ENCODE measurements at regions of chr4 and their contacts with region 1.

Region 1: GRCh38 chr4:39977489-39978377 is at the start of gene PDS5A:
- DNase-seq: peak; percentile 86 to 95 (median 91)
- H3K4me3 ChIP-seq: peak within 1 kb of the TSS; percentile 22 to 66
- H3K4me3 Mint-ChIP-seq: peak within 1 kb of the TSS; percentile 87 to 92 (median 90)
- H3K27ac ChIP-seq: peak within 1 kb of the TSS; percentile 92
- H3K27ac Mint-ChIP-seq: peak within 1 kb of the TSS; percentile 95 to 97 (median 96)
- H3K4me1 ChIP-seq: peaks cover 39% of the 10 kb centered on the region
- H3K4me1 Mint-ChIP-seq: peaks cover 23 to 40% (median 31%) of the 10 kb centered on the region in 4 donors
- H3K27me3 ChIP-seq: no peaks in the 10 kb centered on the region
- H3K27me3 Mint-ChIP-seq: no peaks in the 10 kb centered on the region
- total RNA-seq, gene PDS5A: 96.9 to 97.6 TPM

Region 2: DNA sequence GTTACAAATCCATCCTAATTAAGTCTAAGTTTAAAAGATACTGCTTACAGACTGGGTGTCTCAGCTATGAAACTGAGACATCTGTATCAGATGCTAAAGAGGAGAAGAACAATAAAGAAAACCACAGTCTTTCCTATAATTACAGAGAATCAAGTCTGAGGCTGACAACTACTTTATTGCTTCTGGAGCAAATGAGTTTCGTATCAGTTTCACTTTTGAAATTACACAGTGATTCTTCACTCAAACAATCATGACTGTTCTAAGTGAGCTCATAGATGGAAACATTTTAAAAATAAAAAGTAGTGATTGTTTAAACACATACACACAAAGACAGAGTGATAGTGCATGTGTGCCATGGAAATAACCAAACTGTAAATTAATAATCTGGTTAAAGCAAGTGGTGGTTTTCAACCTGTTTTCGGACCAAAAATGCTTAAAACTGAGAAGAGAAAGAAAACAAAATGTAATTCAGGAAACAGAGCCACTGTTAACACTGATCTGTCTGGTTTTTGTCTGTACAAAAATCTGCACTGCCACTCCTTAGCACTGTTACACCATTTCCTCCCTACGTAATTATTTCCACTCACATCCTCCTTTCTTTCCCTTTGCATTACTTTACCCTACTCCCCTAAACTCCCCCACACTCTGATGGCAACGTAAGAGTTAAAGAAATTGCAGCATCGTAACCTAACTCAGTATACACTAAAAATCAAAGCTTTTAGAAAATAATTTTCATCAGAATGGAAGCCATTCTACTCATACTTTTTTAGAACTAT is 624.1 kb before region 1 on chr4:
- CTCF ChIA-PET with region 1: no interaction called
- POLR2A ChIA-PET with region 1: no interaction called
- intact Hi-C with region 1: loop called (anchors 10 kb)
- DNase-seq: peak; percentile 46 to 70 (median 63)
- H3K4me3 ChIP-seq: peak overlapping the region; percentile 3 to 61
- H3K4me3 Mint-ChIP-seq: peak overlapping the region; percentile 79 to 92 (median 84)
- H3K27ac ChIP-seq: peak overlapping the region; percentile 73
- H3K27ac Mint-ChIP-seq: peak overlapping the region; percentile 91 to 98 (median 94)
- H3K4me1 ChIP-seq: peaks cover 58% of the 10 kb centered on the region
- H3K4me1 Mint-ChIP-seq: peaks cover 39 to 77% (median 53%) of the 10 kb centered on the region in 4 donors
- H3K27me3 ChIP-seq: no peaks in the 10 kb centered on the region
- H3K27me3 Mint-ChIP-seq: no peaks in the 10 kb centered on the region

Region 3: DNA sequence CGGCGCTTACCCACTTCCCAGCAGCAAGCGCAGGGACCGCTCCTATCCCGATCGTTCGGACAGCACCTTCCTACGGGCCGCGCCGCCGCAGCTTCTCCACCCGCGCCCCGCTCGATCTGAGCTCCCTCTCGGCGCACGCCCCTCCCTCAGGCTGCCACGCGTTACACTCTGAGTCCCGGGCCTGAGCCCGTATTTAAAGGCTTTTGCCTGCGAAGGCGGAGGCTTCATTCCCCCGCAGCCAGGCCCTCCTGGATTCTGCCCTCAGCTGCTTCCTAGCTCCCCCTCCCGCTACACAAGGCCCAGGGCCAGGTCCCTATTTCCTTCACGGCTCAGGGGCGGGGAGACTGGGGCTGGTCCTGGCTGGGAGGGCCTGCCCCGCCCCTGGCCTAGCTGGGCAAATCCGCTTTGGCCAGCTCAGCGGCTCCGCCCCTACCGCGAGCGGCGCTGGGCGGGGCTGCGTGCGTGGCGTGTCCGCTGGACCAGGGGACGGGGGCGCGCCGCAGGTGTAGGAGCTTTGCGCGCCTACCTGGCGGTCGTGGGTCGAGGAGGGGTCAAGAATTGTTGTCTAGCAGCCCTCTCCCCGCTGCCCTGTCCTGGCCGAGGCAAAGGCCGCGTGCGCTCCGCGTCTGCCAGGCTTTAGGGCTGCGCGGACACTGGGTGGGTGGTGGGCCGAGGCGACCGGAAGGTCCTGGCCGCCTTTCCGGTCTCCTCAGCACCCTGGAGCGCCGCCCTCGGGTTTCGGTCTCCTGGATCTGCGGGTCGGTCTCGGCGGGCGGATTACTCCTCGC is 450.3 kb before region 1 on chr4 and contains the start of gene UGDH:
- CTCF ChIA-PET with region 1: no interaction called
- POLR2A ChIA-PET with region 1: interaction called, 3 read pairs
- intact Hi-C with region 1: loop called (anchors 1 kb)
- DNase-seq: peak; percentile 88 to 92 (median 90)
- H3K4me3 ChIP-seq: peak within 1 kb of the TSS; percentile 71 to 91
- H3K4me3 Mint-ChIP-seq: peak within 1 kb of the TSS; percentile 97 to 99 (median 98)
- H3K27ac ChIP-seq: peak within 1 kb of the TSS; percentile 69
- H3K27ac Mint-ChIP-seq: peak within 1 kb of the TSS; percentile 78 to 98 (median 96)
- H3K4me1 ChIP-seq: peaks cover 18% of the 10 kb centered on the region
- H3K4me1 Mint-ChIP-seq: peaks cover 10 to 25% (median 18%) of the 10 kb centered on the region in 4 donors
- H3K27me3 ChIP-seq: no peaks in the 10 kb centered on the region
- H3K27me3 Mint-ChIP-seq: no peaks in the 10 kb centered on the region
- total RNA-seq, gene UGDH: 21.6 to 26.5 TPM

Region 4: DNA sequence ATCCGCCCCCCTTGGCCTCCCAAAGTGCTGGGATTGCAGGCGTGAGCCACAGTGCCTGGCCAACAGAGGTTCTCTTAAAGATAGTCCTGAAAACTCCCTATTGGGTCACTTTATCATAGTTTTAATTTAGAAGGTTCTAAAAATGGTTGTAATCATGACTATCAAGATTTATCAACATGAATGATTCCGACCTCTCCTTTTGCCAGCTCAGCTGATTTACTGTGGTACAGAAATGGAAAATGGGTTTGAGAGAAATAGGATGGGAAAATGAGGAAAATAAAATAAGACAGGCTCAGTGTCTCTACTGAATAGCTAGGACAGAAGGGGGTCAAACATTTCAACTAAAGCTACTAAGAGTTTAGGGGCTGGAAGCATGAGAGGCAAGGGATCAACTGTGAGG is 422.3 kb before region 1 on chr4:
- CTCF ChIA-PET with region 1: no interaction called
- POLR2A ChIA-PET with region 1: no interaction called
- intact Hi-C with region 1: no loop called
- DNase-seq: no peak
- H3K4me3 ChIP-seq: no peak overlapping the region
- H3K4me3 Mint-ChIP-seq: no peak overlapping the region
- H3K27ac ChIP-seq: no peak overlapping the region
- H3K27ac Mint-ChIP-seq: no peak overlapping the region
- H3K4me1 ChIP-seq: no peaks in the 10 kb centered on the region
- H3K4me1 Mint-ChIP-seq: no peaks in the 10 kb centered on the region
- H3K27me3 ChIP-seq: no peaks in the 10 kb centered on the region
- H3K27me3 Mint-ChIP-seq: no peaks in the 10 kb centered on the region

Region 5: DNA sequence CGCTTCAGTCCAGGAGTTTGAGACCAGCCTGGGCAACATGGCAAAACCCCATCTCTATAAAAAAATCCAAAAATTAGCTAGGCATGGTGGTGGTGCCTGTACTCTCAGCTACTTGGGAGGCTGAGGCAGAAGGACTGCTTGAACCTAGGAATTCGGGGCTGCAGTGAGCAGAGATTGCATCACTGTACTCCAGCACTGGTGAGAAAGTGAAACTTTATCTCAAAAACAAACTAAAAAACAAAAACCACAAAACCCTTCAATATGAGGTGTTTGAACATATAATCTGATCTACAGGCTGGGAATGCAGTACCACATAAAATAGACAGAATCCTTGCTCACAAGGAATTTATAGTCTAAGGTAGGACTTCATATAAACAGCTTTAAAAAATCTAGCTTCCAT is 103.9 kb before region 1 on chr4:
- CTCF ChIA-PET with region 1: interaction called, 3 read pairs
- POLR2A ChIA-PET with region 1: no interaction called
- intact Hi-C with region 1: loop called (anchors 5 kb)
- DNase-seq: peak in 1 of 5 donors; percentile 2
- H3K4me3 ChIP-seq: no peak overlapping the region
- H3K4me3 Mint-ChIP-seq: peak overlapping the region in 6 of 8 donors; percentile 13 to 42 (median 36)
- H3K27ac ChIP-seq: no peak overlapping the region
- H3K27ac Mint-ChIP-seq: peak overlapping the region in 6 of 7 donors; percentile 50 to 89 (median 78)
- H3K4me1 ChIP-seq: peaks cover 24% of the 10 kb centered on the region
- H3K4me1 Mint-ChIP-seq: peaks cover 14 to 28% (median 19%) of the 10 kb centered on the region in 4 donors
- H3K27me3 ChIP-seq: no peaks in the 10 kb centered on the region
- H3K27me3 Mint-ChIP-seq: no peaks in the 10 kb centered on the region

Region 6: GRCh38 chr4:40056716-40057585 is 79.2 kb after region 1 on chr4 and contains the start of gene N4BP2:
- CTCF ChIA-PET with region 1: interaction called, 5 read pairs
- POLR2A ChIA-PET with region 1: interaction called, 14 read pairs
- intact Hi-C with region 1: loop called (anchors 1 kb)
- DNase-seq: peak; percentile 60 to 78 (median 75)
- H3K4me3 ChIP-seq: peak within 1 kb of the TSS; percentile 82 to 100
- H3K4me3 Mint-ChIP-seq: peak within 1 kb of the TSS; percentile 93 to 99 (median 97)
- H3K27ac ChIP-seq: peak within 1 kb of the TSS; percentile 75
- H3K27ac Mint-ChIP-seq: peak within 1 kb of the TSS; percentile 93 to 99 (median 97)
- H3K4me1 ChIP-seq: peaks cover 36% of the 10 kb centered on the region
- H3K4me1 Mint-ChIP-seq: peaks cover 18 to 48% (median 32%) of the 10 kb centered on the region in 4 donors
- H3K27me3 ChIP-seq: no peaks in the 10 kb centered on the region
- H3K27me3 Mint-ChIP-seq: no peaks in the 10 kb centered on the region
- total RNA-seq, gene N4BP2: 15.0 to 16.7 TPM